CD4-positive, alpha-beta memory T cell (primary cell): ENCODE measurements at regions of chr14 and their contacts with region 1.

Region 1: DNA sequence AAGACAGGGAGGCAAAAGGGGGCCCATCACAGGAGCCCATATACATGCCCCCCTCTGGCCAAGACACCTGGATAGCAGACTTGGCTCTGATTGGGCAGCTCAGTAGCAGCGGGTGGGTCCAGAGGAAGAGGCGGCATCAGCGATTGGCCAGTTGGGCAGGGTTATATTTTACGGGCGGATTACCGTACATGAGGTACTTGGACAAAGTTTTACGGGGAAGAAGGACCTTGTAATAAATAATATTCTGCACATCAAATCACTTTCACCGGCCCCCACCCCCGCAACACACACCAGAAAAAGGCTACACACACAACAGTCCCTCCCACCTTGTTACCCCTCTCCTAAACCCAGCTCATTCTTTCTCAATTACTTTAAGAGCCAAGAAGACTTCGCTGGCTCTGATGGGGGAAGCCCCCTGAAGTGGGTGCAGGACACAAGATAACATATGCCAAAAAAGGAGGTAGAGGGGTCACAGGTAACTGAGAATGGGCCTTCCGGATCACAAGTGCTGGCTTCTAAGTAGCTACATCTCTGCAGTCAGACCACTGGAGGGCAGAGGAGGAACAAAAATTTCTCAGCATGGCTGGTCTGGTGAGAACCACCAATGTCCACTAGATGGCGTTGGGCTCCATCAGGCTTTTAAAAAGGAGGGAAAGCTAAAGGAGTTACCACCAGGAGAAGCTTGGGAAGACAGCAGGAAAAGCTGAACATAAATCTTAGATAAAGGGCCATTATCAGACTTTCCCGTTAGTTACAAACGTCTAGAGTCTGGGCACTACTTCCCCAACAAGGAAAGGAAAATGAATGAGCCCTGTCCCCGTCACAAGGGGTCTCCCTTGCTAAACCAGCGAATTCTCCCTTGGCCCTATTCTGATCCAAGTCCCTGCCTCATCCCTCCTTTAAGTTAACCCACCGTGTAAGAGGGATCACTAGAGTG is 11.4 kb upstream of the CDH24 start:
- DNase-seq: peak; percentile 77 to 81 (median 78)
- H3K4me3 ChIP-seq: no peak overlapping the region
- H3K4me3 Mint-ChIP-seq: peak overlapping the region in 7 of 8 donors; percentile 34 to 74 (median 61)
- H3K27ac ChIP-seq: no peak overlapping the region
- H3K27ac Mint-ChIP-seq: peak overlapping the region; percentile 34 to 93 (median 87)
- H3K4me1 ChIP-seq: peaks cover 28% of the 10 kb centered on the region
- H3K4me1 Mint-ChIP-seq: peaks cover 19 to 41% (median 32%) of the 10 kb centered on the region in 4 donors
- H3K27me3 ChIP-seq: no peaks in the 10 kb centered on the region
- H3K27me3 Mint-ChIP-seq: no peaks in the 10 kb centered on the region

Region 2: DNA sequence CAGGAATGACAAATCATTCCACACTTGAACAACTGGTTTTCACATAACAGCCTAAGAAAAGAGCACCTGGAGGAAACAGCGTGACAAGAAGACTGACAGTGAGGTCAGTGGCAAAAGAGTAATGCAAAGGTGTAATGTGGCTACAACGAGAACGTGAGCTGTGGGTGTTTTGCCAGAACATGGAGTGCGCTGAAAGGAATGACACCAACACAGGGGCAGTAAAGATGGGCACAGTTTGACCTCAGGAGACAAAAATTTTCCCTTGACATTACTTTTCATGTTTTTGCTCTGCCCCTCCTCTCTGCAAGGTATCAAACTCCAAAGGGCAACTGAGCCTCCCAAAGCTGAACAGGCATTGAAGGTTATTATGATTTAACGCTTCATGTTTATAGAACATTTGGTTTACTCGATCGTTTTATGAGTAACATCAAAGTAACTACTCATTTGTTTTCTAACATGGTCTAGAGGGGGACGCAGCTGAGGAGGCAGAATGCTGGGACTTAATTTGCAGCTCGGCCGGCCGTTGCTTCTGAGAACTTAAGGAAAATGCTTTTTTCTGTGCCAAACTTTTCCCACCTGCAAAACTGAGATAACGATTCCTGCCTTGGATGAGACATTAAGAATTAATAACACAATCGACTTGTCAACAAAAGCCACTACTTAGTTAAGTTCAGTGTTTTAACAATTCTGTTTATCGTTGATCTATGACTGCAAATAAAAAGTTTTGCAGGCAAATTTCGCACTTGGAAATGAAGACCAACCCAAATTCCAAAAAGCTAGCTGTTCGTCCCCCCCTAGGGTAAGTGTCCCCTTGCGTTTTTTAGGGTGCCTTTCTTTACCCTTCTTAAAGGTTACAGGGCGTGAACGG is 112.8 kb before region 1 on chr14:
- CTCF ChIA-PET with region 1: interaction called, 10 read pairs
- POLR2A ChIA-PET with region 1: no interaction called
- intact Hi-C with region 1: no loop called
- DNase-seq: peak in 1 of 5 donors; percentile 11
- H3K4me3 ChIP-seq: peak overlapping the region; percentile 30 to 89
- H3K4me3 Mint-ChIP-seq: peak overlapping the region; percentile 91 to 94 (median 92)
- H3K27ac ChIP-seq: peak overlapping the region; percentile 79
- H3K27ac Mint-ChIP-seq: peak overlapping the region; percentile 92 to 95 (median 93)
- H3K4me1 ChIP-seq: peaks cover 16% of the 10 kb centered on the region
- H3K4me1 Mint-ChIP-seq: peaks cover 13 to 22% (median 16%) of the 10 kb centered on the region in 4 donors
- H3K27me3 ChIP-seq: no peaks in the 10 kb centered on the region
- H3K27me3 Mint-ChIP-seq: no peaks in the 10 kb centered on the region

Region 3: GRCh38 chr14:22994762-22995275 is 73.9 kb before region 1 on chr14:
- CTCF ChIA-PET with region 1: interaction called, 1,070 read pairs
- POLR2A ChIA-PET with region 1: no interaction called
- intact Hi-C with region 1: no loop called
- DNase-seq: peak in 1 of 5 donors; percentile 29
- H3K4me3 ChIP-seq: no peak overlapping the region
- H3K4me3 Mint-ChIP-seq: no peak overlapping the region
- H3K27ac ChIP-seq: no peak overlapping the region
- H3K27ac Mint-ChIP-seq: peak overlapping the region in 2 of 7 donors; percentile 57 to 61
- H3K4me1 ChIP-seq: no peaks in the 10 kb centered on the region
- H3K4me1 Mint-ChIP-seq: no peaks in the 10 kb centered on the region
- H3K27me3 ChIP-seq: no peaks in the 10 kb centered on the region
- H3K27me3 Mint-ChIP-seq: no peaks in the 10 kb centered on the region

Region 4: GRCh38 chr14:23089498-23090253 is 20.9 kb after region 1 on chr14:
- CTCF ChIA-PET with region 1: interaction called, 42 read pairs
- POLR2A ChIA-PET with region 1: interaction called, 37 read pairs
- intact Hi-C with region 1: no loop called
- DNase-seq: no peak
- H3K4me3 ChIP-seq: no peak overlapping the region
- H3K4me3 Mint-ChIP-seq: peak overlapping the region in 1 of 8 donors; percentile 3
- H3K27ac ChIP-seq: no peak overlapping the region
- H3K27ac Mint-ChIP-seq: peak overlapping the region in 1 of 7 donors; percentile 14
- H3K4me1 ChIP-seq: peaks cover 29% of the 10 kb centered on the region
- H3K4me1 Mint-ChIP-seq: peaks cover 29 to 50% (median 33%) of the 10 kb centered on the region in 4 donors
- H3K27me3 ChIP-seq: no peaks in the 10 kb centered on the region
- H3K27me3 Mint-ChIP-seq: no peaks in the 10 kb centered on the region

Region 5: GRCh38 chr14:23186913-23187654 is 118.3 kb after region 1 on chr14:
- CTCF ChIA-PET with region 1: interaction called, 24 read pairs
- POLR2A ChIA-PET with region 1: interaction called, 3 read pairs
- intact Hi-C with region 1: loop called (anchors 1 kb)
- DNase-seq: peak in 3 of 5 donors; percentile 22 to 33 (median 29)
- H3K4me3 ChIP-seq: no peak overlapping the region
- H3K4me3 Mint-ChIP-seq: no peak overlapping the region
- H3K27ac ChIP-seq: no peak overlapping the region
- H3K27ac Mint-ChIP-seq: no peak overlapping the region
- H3K4me1 ChIP-seq: peaks cover 12% of the 10 kb centered on the region
- H3K4me1 Mint-ChIP-seq: peaks cover 0 to 3% (median 0%) of the 10 kb centered on the region in 4 donors
- H3K27me3 ChIP-seq: peaks cover 8% of the 10 kb centered on the region
- H3K27me3 Mint-ChIP-seq: peaks cover 0 to 7% of the 10 kb centered on the region in 2 donors